ENCODE measurements at regions of chr2 and their contacts with region 1.

Region 1: GRCh38 chr2:168346725-168347477 is 99.5 kb upstream of the STK39 start:
- DNase-seq: peak; percentile 79
- ATAC-seq: peak; percentile 79
- H3K4me3 Mint-ChIP-seq: peak overlapping the region; percentile 73
- H3K27ac Mint-ChIP-seq: peak overlapping the region; percentile 5
- H3K4me1 Mint-ChIP-seq: peaks cover 5% of the 10 kb centered on the region
- H3K27me3 Mint-ChIP-seq: peaks cover 1% of the 10 kb centered on the region
- CTCF ChIP-seq: peak; percentile 93

Region 2: DNA sequence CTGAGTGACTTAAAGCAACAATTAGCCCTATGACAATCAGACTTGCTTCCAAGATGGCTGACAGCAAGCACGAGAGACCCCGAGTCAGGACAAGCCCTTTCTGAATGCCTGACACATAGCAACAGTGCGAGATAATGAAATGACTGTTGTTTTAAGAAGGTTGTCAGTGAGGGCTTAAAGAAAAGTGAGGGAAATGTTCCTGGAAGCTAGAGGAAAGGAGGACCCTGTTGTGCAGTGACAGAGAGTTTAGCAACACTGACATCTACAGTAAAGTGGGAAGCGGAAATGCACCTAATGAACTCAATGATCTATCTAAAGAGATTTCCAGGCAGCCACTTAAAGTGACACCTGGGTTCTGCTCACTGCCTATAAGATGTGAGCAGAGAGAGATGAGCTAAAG is 262.6 kb before region 1 on chr2:
- CTCF ChIA-PET with region 1: no interaction called
- POLR2A ChIA-PET with region 1: no interaction called
- intact Hi-C with region 1: no loop called
- DNase-seq: no peak
- ATAC-seq: no peak
- H3K4me3 Mint-ChIP-seq: no peak overlapping the region
- H3K27ac Mint-ChIP-seq: no peak overlapping the region
- H3K4me1 Mint-ChIP-seq: peaks cover 15% of the 10 kb centered on the region
- H3K27me3 Mint-ChIP-seq: no peaks in the 10 kb centered on the region
- CTCF ChIP-seq: no peak

Region 3: GRCh38 chr2:168304024-168304681 is 42.7 kb before region 1 on chr2:
- CTCF ChIA-PET with region 1: no interaction called
- POLR2A ChIA-PET with region 1: no interaction called
- intact Hi-C with region 1: no loop called
- DNase-seq: no peak
- ATAC-seq: no peak
- H3K4me3 Mint-ChIP-seq: no peak overlapping the region
- H3K27ac Mint-ChIP-seq: no peak overlapping the region
- H3K4me1 Mint-ChIP-seq: no peaks in the 10 kb centered on the region
- H3K27me3 Mint-ChIP-seq: no peaks in the 10 kb centered on the region
- CTCF ChIP-seq: no peak

Region 4: GRCh38 chr2:168336864-168337263 is 10.0 kb before region 1 on chr2:
- CTCF ChIA-PET with region 1: interaction called, 15 read pairs
- POLR2A ChIA-PET with region 1: no interaction called
- intact Hi-C with region 1: no loop called
- DNase-seq: peak; percentile 62
- ATAC-seq: peak; percentile 96
- H3K4me3 Mint-ChIP-seq: no peak overlapping the region
- H3K27ac Mint-ChIP-seq: no peak overlapping the region
- H3K4me1 Mint-ChIP-seq: no peaks in the 10 kb centered on the region
- H3K27me3 Mint-ChIP-seq: no peaks in the 10 kb centered on the region
- CTCF ChIP-seq: peak; percentile 29

Region 5: DNA sequence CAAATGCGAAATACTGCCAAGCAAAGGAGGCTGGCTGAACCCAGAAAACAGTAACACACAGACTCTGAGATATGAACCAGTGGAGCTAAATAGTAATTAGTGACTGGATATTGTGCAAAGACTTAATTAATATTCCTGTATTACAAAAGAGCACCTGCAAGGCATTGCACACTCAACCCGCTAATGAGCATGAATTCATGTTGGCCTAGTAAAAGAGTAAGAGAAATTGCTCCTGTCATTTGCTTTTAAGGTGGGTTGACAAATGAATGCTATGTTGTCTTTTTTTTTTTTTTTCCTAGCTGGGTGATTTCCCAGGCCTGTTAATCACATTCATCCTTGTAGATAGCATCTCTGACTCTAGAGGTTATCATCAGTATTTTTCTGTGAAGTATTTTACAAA is 22.1 kb after region 1 on chr2:
- CTCF ChIA-PET with region 1: interaction called, 13 read pairs
- POLR2A ChIA-PET with region 1: no interaction called
- intact Hi-C with region 1: no loop called
- DNase-seq: no peak
- ATAC-seq: no peak
- H3K4me3 Mint-ChIP-seq: no peak overlapping the region
- H3K27ac Mint-ChIP-seq: no peak overlapping the region
- H3K4me1 Mint-ChIP-seq: peaks cover 7% of the 10 kb centered on the region
- H3K27me3 Mint-ChIP-seq: no peaks in the 10 kb centered on the region
- CTCF ChIP-seq: no peak

Region 6: DNA sequence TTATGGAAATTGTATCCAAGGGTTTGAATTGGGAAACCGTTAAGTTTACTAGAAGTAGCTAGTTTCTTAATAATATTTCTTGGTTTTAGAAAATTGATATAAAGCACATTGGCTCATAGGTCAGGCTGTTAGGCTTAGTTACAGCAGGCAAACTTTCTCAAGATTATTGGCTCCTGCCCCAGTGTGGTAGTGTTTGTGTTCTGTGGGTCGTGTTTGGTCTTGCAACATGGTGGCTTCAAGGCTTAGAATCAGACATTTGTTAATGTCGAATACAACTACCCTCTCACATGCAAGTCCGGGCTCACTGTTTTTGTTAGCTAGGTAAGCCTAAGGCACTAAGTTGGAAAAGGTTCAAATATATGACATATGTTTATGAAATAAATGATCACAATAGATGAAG is 128.7 kb after region 1 on chr2:
- CTCF ChIA-PET with region 1: no interaction called
- POLR2A ChIA-PET with region 1: no interaction called
- intact Hi-C with region 1: no loop called
- DNase-seq: no peak
- ATAC-seq: no peak
- H3K4me3 Mint-ChIP-seq: no peak overlapping the region
- H3K27ac Mint-ChIP-seq: no peak overlapping the region
- H3K4me1 Mint-ChIP-seq: peaks cover 47% of the 10 kb centered on the region
- H3K27me3 Mint-ChIP-seq: no peaks in the 10 kb centered on the region
- CTCF ChIP-seq: no peak

Region 7: GRCh38 chr2:168705534-168706470 is 358.9 kb after region 1 on chr2:
- CTCF ChIA-PET with region 1: interaction called, 43 read pairs
- POLR2A ChIA-PET with region 1: no interaction called
- intact Hi-C with region 1: loop called (anchors 5 kb)
- DNase-seq: no peak
- ATAC-seq: peak; percentile 27
- H3K4me3 Mint-ChIP-seq: no peak overlapping the region
- H3K27ac Mint-ChIP-seq: no peak overlapping the region
- H3K4me1 Mint-ChIP-seq: no peaks in the 10 kb centered on the region
- H3K27me3 Mint-ChIP-seq: no peaks in the 10 kb centered on the region
- CTCF ChIP-seq: peak; percentile 37

Region 8: GRCh38 chr2:168758970-168759820 is 412.3 kb after region 1 on chr2:
- CTCF ChIA-PET with region 1: interaction called, 19 read pairs
- POLR2A ChIA-PET with region 1: no interaction called
- intact Hi-C with region 1: loop called (anchors 2 kb)
- DNase-seq: peak; percentile 21
- ATAC-seq: peak; percentile 74
- H3K4me3 Mint-ChIP-seq: no peak overlapping the region
- H3K27ac Mint-ChIP-seq: no peak overlapping the region
- H3K4me1 Mint-ChIP-seq: peaks cover 35% of the 10 kb centered on the region
- H3K27me3 Mint-ChIP-seq: no peaks in the 10 kb centered on the region
- CTCF ChIP-seq: peak; percentile 65

Measured in activated CD8-positive, alpha-beta T cell treated with anti-CD3 and anti-CD28 coated beads for 36 hours (primary cell).